Common myeloid progenitor, CD34-positive (primary cell): ENCODE measurements at regions of chr20 and their contacts with region 1.

Region 1: DNA sequence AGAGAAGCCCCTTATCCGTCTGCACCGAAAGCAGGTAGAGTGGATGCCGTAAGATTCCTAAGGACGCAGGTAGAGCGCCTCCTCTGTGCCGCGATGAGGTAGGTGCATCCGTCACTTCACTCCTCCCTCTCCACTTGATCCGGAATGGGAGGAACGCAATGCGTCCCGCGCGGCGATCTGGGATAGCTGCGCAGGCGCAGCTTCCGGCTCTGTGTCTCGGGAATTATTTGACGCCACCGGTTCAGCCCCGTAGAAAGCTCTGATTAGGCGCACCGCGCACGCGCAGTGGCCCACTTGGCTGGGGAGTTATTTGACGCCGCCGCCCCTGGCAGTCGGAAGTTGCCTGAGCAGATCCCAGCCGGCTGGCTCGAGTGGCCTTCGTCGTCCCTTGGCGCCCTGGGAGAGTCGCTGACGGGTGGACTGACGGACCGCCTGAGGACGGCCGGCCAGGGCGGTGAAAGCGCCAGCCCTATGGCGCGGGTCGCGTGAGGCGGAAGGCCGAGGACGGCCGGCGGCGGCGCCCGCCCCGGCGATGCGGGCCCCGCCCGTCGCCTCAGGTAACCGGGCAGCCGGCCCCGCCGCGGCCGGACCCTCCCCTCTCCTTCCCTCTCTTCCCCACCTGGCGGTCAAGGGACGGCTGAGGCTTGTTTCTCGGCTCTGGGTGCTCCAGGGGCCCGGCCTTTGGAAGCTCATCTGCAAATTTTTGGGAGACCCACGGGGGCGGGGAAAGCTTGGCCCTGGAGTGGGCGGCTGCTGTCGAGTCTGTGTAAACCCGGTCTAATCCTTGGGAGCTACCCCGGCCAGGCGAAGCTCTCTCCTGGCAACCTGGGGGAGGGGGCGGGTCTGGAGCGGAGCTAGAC is at the start of gene RALGAPB:
- DNase-seq: peak; percentile 97 to 98 (median 97)
- H3K4me3 ChIP-seq: peak within 1 kb of the TSS; percentile 72 to 92 (median 88)
- H3K27ac ChIP-seq: peak within 1 kb of the TSS; percentile 62 to 86
- H3K4me1 ChIP-seq: peaks cover 7 to 16% (median 15%) of the 10 kb centered on the region in 4 experiments
- H3K27me3 ChIP-seq: peaks cover 0 to 4% (median 0%) of the 10 kb centered on the region in 5 experiments

Region 2: DNA sequence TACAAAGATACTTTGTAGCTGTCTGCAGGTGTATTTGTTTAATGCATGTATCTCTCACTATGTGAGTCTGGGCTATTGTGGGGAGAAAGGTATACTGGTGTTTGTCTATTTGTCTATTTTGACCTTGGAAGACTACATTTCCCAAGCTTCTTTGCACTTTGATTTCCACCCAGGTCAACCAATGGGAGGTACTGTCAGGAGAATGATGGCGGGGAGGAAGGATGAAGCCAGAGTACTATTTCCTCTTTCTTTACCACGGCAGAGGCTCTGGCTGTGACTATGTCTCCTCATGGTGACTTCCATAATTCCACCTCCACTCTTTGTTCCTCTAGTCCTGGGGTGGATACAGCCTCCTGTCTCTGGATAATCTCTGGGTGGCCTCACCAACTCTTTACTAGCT is 103.4 kb before region 1 on chr20:
- CTCF ChIA-PET with region 1: no interaction called
- POLR2A ChIA-PET with region 1: no interaction called
- DNase-seq: peak in 2 of 3 donors; percentile 35 to 36
- H3K4me3 ChIP-seq: no peak overlapping the region
- H3K27ac ChIP-seq: no peak overlapping the region
- H3K4me1 ChIP-seq: no peaks in the 10 kb centered on the region
- H3K27me3 ChIP-seq: peaks cover 0 to 5% (median 0%) of the 10 kb centered on the region in 5 experiments

Region 3: GRCh38 chr20:38434743-38435554 is 37.8 kb before region 1 on chr20 and contains the start of gene SNHG17:
- CTCF ChIA-PET with region 1: interaction called, 12 read pairs
- POLR2A ChIA-PET with region 1: interaction called, 3 read pairs
- DNase-seq: peak; percentile 95 to 97 (median 97)
- H3K4me3 ChIP-seq: peak within 1 kb of the TSS; percentile 74 to 96 (median 79)
- H3K27ac ChIP-seq: peak within 1 kb of the TSS; percentile 55 to 87
- H3K4me1 ChIP-seq: peaks cover 0 to 28% (median 21%) of the 10 kb centered on the region in 4 experiments
- H3K27me3 ChIP-seq: no peaks in the 10 kb centered on the region

Region 4: DNA sequence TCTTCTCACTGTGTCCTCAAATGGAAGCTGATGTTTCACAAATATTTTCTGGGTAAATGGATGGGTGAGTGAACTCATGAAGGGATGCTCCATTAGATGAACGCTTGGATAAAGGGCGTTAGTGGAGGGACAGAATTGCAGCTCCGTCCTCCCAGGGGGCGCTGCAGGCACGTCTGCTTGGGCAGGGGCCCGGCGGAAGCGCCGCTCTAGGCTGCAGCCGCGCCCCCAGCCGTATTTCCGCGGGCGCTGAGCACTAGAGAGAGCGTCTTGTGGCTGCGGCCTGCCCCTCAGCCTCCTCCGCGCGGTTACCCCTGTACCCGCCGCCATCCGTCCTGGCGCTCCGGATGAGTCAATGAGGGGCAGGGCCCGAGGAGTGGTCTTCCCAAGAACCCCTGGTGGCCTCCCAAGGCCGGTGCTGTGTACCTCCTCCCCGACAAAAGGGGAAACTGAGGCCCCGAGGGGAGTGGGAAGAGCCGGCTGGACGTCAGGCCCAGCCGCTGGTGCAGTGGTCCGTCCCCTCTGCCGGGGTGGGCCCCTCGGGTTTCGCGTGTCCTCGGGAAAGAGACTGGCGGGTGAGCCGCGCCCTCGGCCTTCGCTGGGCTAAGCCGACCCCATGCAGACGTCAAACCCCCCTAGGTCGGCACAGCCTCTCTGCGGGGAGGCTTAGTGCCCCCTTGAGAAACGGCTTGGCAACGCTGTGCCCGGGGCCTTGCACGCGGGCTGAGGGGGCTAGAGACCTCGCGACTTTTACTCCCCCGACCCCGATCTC is 26.1 kb before region 1 on chr20:
- CTCF ChIA-PET with region 1: interaction called, 15 read pairs
- POLR2A ChIA-PET with region 1: no interaction called
- DNase-seq: peak; percentile 96 to 98 (median 97)
- H3K4me3 ChIP-seq: peak overlapping the region; percentile 64 to 93 (median 84)
- H3K27ac ChIP-seq: peak overlapping the region; percentile 56 to 85
- H3K4me1 ChIP-seq: peaks cover 0 to 19% (median 14%) of the 10 kb centered on the region in 4 experiments
- H3K27me3 ChIP-seq: no peaks in the 10 kb centered on the region

Region 5: GRCh38 chr20:38453941-38454340 is 18.8 kb before region 1 on chr20:
- CTCF ChIA-PET with region 1: interaction called, 15 read pairs
- POLR2A ChIA-PET with region 1: no interaction called
- DNase-seq: no peak
- H3K4me3 ChIP-seq: no peak overlapping the region
- H3K27ac ChIP-seq: no peak overlapping the region
- H3K4me1 ChIP-seq: no peaks in the 10 kb centered on the region
- H3K27me3 ChIP-seq: no peaks in the 10 kb centered on the region

Region 6: GRCh38 chr20:38501861-38502436 is 29.2 kb after region 1 on chr20:
- CTCF ChIA-PET with region 1: no interaction called
- POLR2A ChIA-PET with region 1: no interaction called
- DNase-seq: no peak
- H3K4me3 ChIP-seq: no peak overlapping the region
- H3K27ac ChIP-seq: no peak overlapping the region
- H3K4me1 ChIP-seq: no peaks in the 10 kb centered on the region
- H3K27me3 ChIP-seq: no peaks in the 10 kb centered on the region